WTC11 (cell line): ENCODE measurements at regions of chr20 and their contacts with region 1.

Region 1: DNA sequence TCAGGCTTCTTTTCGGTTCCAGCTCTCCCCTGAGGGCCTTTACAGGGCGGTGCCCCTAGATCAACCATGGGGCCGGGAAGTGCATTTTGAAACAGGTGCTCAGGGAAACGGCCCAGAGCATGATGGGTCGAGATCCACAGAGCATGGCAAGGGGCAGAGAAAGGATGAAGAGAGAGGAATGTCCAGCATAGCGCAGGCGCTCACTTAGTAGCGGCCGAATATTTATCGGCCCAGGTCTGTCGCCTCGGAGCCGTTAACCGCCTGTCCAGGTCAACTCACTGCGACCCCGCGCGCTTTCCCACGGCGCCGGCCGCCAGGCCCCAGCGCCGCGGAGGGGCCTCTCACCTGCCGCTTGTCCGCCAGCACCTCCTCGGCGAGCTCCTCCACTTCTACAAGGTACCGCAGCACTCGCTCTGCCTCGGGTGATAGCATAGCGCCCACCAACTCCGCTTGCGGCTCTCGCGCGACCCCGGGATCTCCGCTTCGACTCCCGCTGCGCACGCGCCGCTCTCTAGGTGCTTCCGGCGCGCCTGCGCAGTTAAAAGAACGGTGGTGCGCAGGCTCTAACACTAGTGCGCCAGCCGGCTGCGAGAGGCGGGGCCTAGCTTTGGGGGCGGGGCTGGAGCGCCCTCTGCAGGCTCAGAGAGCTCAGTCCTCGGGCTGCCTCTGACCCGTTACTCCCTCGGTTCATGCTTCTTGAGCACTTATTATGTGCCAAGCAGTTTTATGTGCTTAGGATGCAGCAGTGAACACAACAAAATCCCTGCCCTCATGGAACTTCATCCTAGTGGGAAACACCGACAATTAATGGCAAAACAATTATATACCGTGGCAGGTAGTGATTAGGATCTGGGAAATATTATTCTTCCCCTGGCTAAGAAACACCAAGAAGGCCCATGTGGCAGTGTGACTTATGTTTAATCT is at the start of gene PDRG1:
- DNase-seq: peak; percentile 98
- ATAC-seq: peak; percentile 98
- H3K4me3 Mint-ChIP-seq: peak within 1 kb of the TSS; percentile 98
- H3K27ac Mint-ChIP-seq: peak within 1 kb of the TSS; percentile 92
- H3K4me1 Mint-ChIP-seq: peaks cover 8% of the 10 kb centered on the region
- H3K27me3 Mint-ChIP-seq: peaks cover 15% of the 10 kb centered on the region
- CTCF ChIP-seq: peak; percentile 77
- total RNA-seq, gene PDRG1: 16.0 to 17.6 TPM (median 17.2 TPM) in 3 replicates

Region 2: DNA sequence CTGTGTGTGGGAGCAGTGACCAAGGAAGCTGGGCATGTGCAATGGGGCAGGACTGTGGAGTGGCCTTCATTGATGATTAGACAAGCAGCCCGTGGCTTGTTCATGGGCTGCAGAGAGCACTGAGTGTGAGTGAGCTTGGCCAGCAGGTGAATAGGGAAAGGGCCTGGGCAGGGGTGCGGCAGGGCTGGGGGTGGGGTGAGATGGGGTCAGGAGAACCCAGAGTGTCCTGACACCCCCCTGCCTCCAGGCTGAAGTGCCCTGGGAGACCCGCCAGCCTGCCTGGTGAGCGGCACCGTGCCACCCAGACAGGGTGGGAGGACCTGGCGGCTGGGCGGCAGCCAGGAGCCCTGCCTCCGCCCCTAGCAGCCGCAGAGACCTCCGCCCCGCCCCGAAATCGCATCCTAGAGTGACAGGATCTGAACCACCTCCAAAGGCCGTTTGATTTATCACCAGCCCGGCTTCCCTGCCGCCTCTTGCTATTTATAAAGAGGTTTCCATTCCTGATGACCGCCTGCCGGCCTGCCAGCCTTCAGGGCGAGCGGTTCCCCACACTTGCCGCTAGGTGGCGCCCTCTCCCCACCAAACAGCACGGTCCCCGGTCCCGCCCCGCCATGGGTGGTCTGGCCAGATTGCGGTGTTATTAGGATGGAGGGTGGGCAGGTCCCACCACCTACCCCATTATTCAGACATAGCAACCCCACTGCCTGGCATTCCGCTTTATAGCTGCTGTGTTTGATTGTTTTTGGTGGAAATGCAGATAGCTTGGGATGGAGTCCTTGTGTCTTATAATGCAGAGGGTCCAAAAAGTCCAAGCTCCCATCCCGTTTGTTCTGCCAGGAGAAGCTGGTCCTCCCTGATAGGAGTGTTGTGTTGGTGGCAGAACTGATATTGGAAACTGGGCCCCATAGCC is 129.1 kb before region 1 on chr20:
- CTCF ChIA-PET with region 1: interaction called, 15 read pairs
- POLR2A ChIA-PET with region 1: no interaction called
- DNase-seq: peak; percentile 92
- ATAC-seq: peak; percentile 73
- H3K4me3 Mint-ChIP-seq: peak overlapping the region; percentile 49
- H3K27ac Mint-ChIP-seq: no peak overlapping the region
- H3K4me1 Mint-ChIP-seq: peaks cover 7% of the 10 kb centered on the region; the same call in 1 of the 2 replicates
- H3K27me3 Mint-ChIP-seq: no peaks in the 10 kb centered on the region
- CTCF ChIP-seq: peak; percentile 99

Region 3: GRCh38 chr20:31861346-31862156 is 90.2 kb before region 1 on chr20:
- CTCF ChIA-PET with region 1: interaction called, 14 read pairs
- POLR2A ChIA-PET with region 1: interaction called, 6 read pairs
- DNase-seq: peak; percentile 82
- ATAC-seq: peak; percentile 82
- H3K4me3 Mint-ChIP-seq: peak overlapping the region; percentile 91
- H3K27ac Mint-ChIP-seq: peak overlapping the region; percentile 93
- H3K4me1 Mint-ChIP-seq: peaks cover 15% of the 10 kb centered on the region
- H3K27me3 Mint-ChIP-seq: peaks cover 37% of the 10 kb centered on the region
- CTCF ChIP-seq: no peak

Region 4: DNA sequence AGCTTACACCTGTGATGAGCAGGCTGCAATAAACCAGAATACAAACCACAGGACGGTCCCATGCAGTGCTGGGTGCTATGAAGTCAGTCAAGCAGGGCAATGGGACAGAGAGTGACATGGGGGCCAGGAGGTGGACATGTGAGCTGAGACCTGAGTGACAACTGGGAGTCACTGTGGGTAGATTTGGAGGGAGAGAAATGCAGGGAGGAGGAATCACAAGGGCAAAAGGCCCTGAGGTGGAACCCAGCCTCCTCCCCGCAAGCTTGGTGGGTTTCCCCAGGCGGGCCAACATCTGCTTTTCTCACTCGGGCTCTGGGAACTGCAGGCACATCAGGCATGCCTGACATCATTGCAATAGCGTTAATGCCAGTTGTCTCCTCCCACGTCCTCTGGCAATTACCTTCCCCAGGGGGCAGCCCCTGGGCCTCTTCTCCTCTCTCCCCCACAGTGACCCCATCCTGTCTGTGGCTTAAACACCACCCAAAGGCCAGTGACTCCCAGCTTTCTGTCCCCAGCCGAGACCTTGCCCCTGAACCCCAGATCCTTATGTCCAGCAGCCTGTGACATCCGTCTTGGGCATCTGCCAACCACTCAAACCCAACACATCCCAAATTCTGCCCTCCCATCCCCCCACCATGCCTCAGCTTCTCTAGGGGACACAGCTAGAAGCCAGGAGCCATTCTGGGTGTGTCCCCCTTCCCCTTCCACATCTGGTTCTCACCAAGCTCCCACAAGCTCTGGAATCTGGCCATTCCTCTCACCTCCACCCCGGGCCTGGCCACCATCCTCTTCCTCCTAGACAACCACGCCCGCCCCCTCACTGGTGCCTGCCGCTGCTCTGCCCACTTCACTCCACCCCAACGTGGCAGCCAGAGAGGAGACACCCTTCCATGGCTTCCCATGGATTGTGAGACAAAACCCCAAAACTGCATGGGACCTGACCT is 28.1 kb before region 1 on chr20:
- CTCF ChIA-PET with region 1: interaction called, 20 read pairs
- POLR2A ChIA-PET with region 1: no interaction called
- DNase-seq: no peak
- ATAC-seq: no peak
- H3K4me3 Mint-ChIP-seq: no peak overlapping the region
- H3K27ac Mint-ChIP-seq: no peak overlapping the region
- H3K4me1 Mint-ChIP-seq: peaks cover 19% of the 10 kb centered on the region
- H3K27me3 Mint-ChIP-seq: peaks cover under 1% of the 10 kb centered on the region; the same call in 1 of the 2 replicates
- CTCF ChIP-seq: no peak

Region 5: GRCh38 chr20:31968291-31969126 is 16.7 kb after region 1 on chr20:
- CTCF ChIA-PET with region 1: interaction called, 18 read pairs
- POLR2A ChIA-PET with region 1: interaction called, 4 read pairs
- DNase-seq: peak; percentile 95
- ATAC-seq: peak; percentile 85
- H3K4me3 Mint-ChIP-seq: peak overlapping the region; percentile 93
- H3K27ac Mint-ChIP-seq: peak overlapping the region; percentile 88; the same call in 1 of the 2 replicates
- H3K4me1 Mint-ChIP-seq: peaks cover 20% of the 10 kb centered on the region
- H3K27me3 Mint-ChIP-seq: peaks cover 47% of the 10 kb centered on the region
- CTCF ChIP-seq: no peak

Region 6: DNA sequence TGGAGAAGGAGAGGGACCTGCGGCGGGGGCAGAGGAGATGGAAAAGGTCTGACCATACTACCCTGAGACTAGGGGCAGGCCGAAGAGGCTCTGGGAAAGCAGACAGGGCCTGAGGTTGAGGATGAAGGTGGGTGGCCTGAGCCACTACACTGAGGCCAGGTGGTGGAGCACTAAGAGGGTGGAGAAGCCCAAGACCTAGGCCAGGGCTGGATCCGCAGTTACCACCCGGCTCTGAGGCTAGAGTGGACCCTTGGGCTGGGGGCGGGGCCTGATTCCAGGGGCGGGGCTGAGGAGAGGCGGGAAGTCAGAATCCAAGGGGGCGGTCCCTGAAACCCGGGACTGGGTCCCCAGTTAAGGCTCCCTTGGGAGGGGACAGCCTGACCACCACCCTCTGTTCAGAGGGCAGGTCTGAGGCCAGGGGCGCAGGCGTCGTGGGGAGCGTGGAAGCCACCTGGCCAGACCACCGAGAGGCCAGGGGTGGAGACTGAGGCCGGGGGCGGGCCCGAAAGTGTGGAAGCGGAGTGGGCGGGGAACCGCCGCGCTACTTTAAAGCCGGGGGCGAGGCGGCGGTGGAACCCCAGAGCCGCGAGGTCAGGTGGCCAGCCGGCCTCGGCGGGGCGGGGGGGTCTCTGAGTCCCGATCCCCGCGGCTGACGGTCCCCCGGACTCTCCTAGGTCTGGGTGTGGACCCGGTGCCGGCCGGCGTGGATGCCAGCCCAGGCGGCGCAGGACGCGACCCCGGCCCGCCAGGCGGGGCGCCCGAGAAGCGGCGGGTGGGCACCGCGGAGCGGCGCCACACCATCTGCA is 66.7 kb after region 1 on chr20:
- CTCF ChIA-PET with region 1: interaction called, 30 read pairs
- POLR2A ChIA-PET with region 1: interaction called, 5 read pairs
- DNase-seq: peak; percentile 96
- ATAC-seq: peak; percentile 85
- H3K4me3 Mint-ChIP-seq: peak overlapping the region; percentile 89
- H3K27ac Mint-ChIP-seq: peak overlapping the region; percentile 96
- H3K4me1 Mint-ChIP-seq: peaks cover 33% of the 10 kb centered on the region
- H3K27me3 Mint-ChIP-seq: peaks cover 16% of the 10 kb centered on the region
- CTCF ChIP-seq: peak; percentile 6; the same call in 1 of the 2 replicates